GM13976 (cell line): ENCODE measurements at regions of chr1 and their contacts with region 1.

Region 1: DNA sequence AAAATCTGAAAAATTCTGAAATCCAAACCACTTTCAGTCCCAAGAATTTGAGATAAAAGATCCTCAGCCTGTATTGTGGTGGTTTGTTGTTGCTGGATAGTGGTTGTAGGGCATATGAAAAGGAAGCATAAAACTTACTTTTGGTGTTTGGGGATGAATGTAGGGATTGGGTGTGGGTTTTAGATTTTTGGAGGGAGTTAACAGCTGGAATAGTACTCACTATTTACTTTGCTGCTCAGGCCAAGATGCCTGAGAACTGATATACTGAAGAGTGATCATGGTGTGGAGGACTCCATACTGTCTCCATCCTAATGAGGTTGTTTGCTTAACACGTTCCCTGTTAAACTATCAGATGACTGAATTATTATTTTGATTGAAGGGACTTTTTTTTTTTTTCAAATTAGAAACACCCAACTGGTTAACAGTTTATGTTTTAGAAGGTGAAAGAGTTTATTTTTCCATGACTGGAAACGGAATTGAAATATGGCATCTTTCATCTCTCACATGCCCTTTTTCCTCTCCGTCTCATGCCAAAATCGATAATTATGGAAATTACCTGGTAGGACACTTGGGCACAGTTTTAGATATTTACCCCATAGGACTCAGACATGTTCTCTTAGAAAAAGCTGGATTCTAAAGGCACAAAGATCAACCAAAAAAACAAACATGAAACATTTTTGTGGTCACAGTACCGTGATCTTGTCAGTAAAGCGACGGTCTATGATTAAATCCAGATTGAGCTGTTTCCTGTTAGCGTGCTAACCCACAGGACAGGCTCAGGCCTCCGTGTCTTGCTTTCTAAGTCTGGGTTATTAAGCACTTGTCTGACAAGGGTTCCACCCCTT is 37.3 kb downstream of the RGL1 start:
- DNase-seq: peak; percentile 45
- CTCF ChIP-seq: no peak

Region 2: DNA sequence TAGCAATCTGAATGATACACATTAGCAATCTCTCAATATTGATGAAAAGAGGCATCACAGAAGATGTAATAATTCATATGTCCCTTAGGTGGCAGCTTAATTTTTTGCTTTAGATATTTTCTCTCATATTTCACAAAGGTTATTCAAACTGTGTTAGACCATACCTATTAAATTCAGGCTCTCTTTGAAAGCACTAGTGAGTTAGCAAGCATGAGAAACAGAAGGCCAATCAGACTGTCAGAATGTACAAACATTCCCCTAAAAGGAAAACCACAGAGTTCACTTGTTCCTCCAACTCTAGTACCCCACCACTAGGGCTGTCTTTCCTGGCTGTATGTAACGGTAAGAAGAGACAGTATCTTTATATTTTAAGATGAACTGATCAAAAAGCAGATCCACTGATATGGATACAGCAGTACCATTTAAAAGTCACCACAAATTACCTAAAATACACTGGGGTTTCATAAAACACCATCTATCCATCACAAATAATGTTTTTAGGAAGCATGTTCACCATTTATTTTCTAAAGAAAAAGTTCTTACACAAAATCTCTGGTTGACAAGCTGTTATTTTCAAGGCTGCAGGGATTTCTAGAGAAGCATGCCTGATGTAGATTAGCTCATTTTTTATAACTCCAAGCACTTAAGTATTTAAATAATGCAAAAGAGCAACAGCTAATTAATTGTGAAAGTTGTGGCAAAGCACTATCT is 208.4 kb before region 1 on chr1:
- in situ Hi-C with region 1: no loop called
- DNase-seq: peak; percentile 50
- CTCF ChIP-seq: no peak

Region 3: DNA sequence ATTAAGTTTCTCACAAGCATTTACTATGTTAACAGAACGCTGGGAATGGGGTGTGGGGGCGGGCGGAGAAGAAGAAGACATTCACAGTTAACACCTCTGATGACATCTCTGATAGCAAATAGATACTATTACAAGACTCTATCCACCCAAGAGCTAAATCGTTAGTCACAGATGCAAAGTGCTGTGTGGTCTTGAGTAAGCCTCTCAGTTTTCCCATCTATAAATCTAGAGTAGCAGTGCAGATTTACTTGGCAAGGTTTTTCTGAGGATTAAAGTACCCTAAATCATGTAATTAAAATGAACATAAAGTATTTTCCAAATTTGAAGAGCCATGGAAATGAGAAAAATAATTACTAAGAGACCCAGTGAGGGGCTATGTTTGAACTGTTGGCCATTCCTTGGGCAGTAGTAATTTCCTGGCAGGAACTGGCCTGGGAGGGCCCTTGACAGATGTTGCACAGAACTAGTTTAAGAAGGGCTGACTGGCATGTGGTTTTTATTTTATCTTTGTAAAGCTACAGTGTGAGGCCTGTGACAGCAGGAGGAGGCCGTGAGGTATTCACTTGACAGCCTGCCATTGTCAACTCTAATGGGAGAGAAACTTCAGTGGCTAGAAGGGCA is 130.3 kb before region 1 on chr1:
- in situ Hi-C with region 1: no loop called
- DNase-seq: no peak
- CTCF ChIP-seq: no peak

Region 4: GRCh38 chr1:183901748-183902330 is 59.7 kb after region 1 on chr1:
- in situ Hi-C with region 1: loop called (anchors 10 kb)
- DNase-seq: peak; percentile 16
- CTCF ChIP-seq: no peak

Region 5: DNA sequence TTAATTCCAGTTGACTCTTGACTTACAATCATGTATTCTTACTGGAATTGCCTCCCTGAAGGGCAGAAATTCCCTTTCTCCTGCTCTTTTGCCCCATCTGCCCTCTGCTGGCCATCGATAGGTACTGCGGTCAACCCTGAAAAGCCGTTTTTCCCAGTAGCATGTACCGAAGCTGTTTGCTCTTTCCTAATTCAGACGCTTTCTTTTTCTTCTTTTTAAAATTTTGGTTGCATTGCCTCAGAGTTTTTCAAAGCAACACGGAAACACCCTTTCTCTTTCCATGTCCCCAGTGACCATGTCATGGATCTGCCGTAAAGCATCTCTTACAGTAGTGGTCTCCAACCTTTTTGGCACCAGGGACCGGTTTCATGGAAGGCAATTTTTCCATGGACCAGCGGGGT is 380.5 kb after region 1 on chr1:
- in situ Hi-C with region 1: no loop called
- DNase-seq: peak; percentile 69
- CTCF ChIP-seq: peak; percentile 93